PC-9 (cell line): ENCODE measurements at regions of chr6 and their contacts with region 1.

Region 1: DNA sequence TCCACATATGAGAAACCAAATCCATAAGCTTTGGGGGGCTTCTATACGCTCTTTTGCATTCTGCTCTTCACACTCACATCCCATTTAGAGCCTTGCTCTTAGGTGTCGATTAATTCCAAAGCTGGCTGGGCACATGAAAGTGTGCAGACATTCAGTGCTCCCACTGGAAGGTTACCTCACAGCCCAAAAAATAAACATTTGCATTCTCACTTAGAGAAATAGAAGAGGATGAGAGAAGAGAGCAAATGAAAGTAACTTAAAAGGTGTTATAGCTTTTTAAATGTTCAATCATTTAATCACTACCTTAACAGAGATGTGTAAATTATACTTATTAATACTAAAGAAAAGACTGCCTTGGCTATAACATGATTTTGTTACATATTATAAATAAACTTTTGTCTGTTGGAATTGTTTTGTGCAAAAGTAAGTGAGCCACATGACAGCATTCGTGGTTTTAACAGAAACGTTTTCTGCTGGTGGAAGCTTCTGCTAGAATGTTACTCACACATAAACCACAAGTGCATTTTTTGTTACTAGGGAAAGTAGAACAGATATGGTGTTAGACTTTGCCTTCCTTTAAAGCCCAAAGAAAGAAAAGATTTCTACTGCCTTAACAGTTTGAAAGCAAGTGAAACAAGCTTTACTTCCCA is 116.7 kb downstream of the SIM1 start:
- DNase-seq: no peak
- H3K4me3 ChIP-seq: no peak overlapping the region
- H3K27ac ChIP-seq: no peak overlapping the region
- H3K4me1 ChIP-seq: no peaks in the 10 kb centered on the region
- H3K27me3 ChIP-seq: no peaks in the 10 kb centered on the region
- CTCF ChIP-seq: no peak

Region 2: DNA sequence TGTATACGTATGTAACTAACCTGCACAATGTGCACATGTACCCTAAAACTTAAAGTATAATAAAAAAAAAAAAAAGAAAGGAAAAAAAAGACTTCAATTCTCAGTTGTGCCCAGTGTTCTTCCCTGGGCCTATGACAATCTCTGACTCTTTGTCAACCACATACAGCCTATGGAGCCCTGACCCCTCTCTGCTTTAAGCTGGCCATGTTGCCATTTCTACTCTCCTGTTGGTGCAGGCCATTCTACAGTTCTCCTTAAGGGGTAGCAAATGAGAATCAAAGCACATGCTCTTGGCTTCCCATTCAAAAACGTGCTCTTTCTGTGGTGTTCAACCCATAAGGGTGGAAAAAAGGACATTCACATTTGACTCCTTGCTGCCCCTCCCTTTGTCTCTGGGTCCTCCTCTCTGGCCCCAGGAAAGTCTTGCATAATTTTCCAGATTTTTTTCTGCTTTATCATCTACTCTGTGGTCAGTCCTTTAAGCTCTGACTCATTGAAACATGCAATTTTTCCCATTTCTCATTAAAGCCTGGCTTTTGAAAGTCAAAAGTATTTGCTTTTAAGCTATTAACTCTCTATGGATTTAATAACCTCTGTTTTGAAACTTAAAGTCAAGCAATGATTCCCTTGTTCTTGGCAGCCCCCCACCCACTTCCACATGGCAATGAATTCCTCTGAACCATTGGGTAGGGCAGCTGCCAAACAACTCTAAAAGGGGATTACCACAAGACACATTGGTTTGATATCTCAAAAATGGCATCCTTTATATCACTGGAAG is 145.4 kb before region 1 on chr6:
- CTCF ChIA-PET with region 1: no interaction called
- POLR2A ChIA-PET with region 1: no interaction called
- intact Hi-C with region 1: loop called (anchors 5 kb)
- DNase-seq: peak; percentile 31 to 83
- H3K4me3 ChIP-seq: no peak overlapping the region
- H3K27ac ChIP-seq: peak overlapping the region; percentile 95
- H3K4me1 ChIP-seq: peaks cover 16% of the 10 kb centered on the region
- H3K27me3 ChIP-seq: no peaks in the 10 kb centered on the region
- CTCF ChIP-seq: no peak

Region 3: GRCh38 chr6:100363651-100364050 is 15.6 kb after region 1 on chr6:
- CTCF ChIA-PET with region 1: no interaction called
- POLR2A ChIA-PET with region 1: no interaction called
- intact Hi-C with region 1: no loop called
- DNase-seq: no peak
- H3K4me3 ChIP-seq: no peak overlapping the region
- H3K27ac ChIP-seq: no peak overlapping the region
- H3K4me1 ChIP-seq: no peaks in the 10 kb centered on the region
- H3K27me3 ChIP-seq: no peaks in the 10 kb centered on the region
- CTCF ChIP-seq: no peak

Region 4: DNA sequence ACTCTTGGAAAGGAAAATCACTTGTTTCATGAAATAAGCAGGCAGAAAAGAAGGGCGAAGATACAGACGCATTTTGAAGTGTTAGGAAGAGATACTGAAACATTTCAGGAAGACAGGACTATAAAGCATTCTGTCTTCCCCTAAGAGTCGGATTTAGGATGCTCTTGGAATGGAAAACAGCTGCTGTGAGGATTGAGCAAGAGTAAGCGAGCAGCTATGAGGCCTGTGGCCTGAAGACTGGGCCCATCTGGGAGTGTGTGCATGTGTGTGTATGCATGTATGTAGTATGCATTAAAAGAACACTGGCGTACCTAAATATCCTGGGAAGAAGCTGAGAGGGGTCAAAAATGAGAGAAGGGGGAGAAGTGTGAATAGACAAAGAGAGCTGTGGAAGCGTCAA is 33.1 kb after region 1 on chr6:
- CTCF ChIA-PET with region 1: no interaction called
- POLR2A ChIA-PET with region 1: interaction called, 35 read pairs
- intact Hi-C with region 1: no loop called
- DNase-seq: no peak
- H3K4me3 ChIP-seq: no peak overlapping the region
- H3K27ac ChIP-seq: no peak overlapping the region
- H3K4me1 ChIP-seq: no peaks in the 10 kb centered on the region
- H3K27me3 ChIP-seq: no peaks in the 10 kb centered on the region
- CTCF ChIP-seq: no peak

Region 5: DNA sequence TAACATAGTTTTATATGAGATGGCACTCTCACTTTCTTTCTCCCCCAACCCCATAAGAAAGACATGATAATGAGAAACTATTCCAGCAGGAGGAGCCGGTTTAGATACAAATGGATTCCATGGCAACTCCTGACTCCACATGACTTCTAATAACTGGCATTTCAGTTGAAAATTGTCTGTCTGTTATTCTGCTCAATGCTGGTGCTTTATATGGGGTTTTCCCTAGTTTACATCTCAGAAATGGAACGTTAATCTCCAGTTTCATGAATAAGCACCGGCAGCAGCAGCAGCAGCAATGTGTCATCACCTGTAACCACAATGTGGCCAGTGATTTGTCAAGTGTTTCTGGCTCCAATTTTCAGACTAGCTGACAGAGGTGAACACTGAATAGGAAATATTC is 124.6 kb after region 1 on chr6:
- CTCF ChIA-PET with region 1: no interaction called
- POLR2A ChIA-PET with region 1: no interaction called
- intact Hi-C with region 1: loop called (anchors 5 kb)
- DNase-seq: peak; percentile 34 to 41
- H3K4me3 ChIP-seq: no peak overlapping the region
- H3K27ac ChIP-seq: no peak overlapping the region
- H3K4me1 ChIP-seq: no peaks in the 10 kb centered on the region
- H3K27me3 ChIP-seq: no peaks in the 10 kb centered on the region
- CTCF ChIP-seq: 0 out of 2 replicates have a peak, but pooled peaks have one; percentile 21